ENCODE measurements at regions of chr12 and their contacts with region 1.

Region 1: GRCh38 chr12:12696562-12697383 is 790 bp upstream of the GPR19 start:
- DNase-seq: peak; percentile 94
- ATAC-seq: peak; percentile 80
- H3K4me3 Mint-ChIP-seq: peak overlapping the region; percentile 83
- H3K27ac Mint-ChIP-seq: peak overlapping the region; percentile 99
- H3K4me1 Mint-ChIP-seq: peaks cover 53% of the 10 kb centered on the region
- H3K27me3 Mint-ChIP-seq: no peaks in the 10 kb centered on the region

Region 2: GRCh38 chr12:12356886-12357718 is 339.7 kb before region 1 on chr12 and contains the start of gene BORCS5:
- CTCF ChIA-PET with region 1: interaction called, 3 read pairs
- POLR2A ChIA-PET with region 1: interaction called, 8 read pairs
- intact Hi-C with region 1: loop called (anchors 1 to 5 kb)
- DNase-seq: peak; percentile 99
- ATAC-seq: peak; percentile 94
- H3K4me3 Mint-ChIP-seq: peak within 1 kb of the TSS; percentile 98
- H3K27ac Mint-ChIP-seq: peak within 1 kb of the TSS; percentile 99
- H3K4me1 Mint-ChIP-seq: peaks cover 38% of the 10 kb centered on the region
- H3K27me3 Mint-ChIP-seq: no peaks in the 10 kb centered on the region
- total RNA-seq, gene BORCS5: 41.8 to 45.0 TPM

Region 3: GRCh38 chr12:12474931-12475795 is 221.6 kb before region 1 on chr12:
- CTCF ChIA-PET with region 1: no interaction called
- POLR2A ChIA-PET with region 1: no interaction called
- intact Hi-C with region 1: loop called in 1 of 2 experiments (anchors 1 kb)
- DNase-seq: peak; percentile 78
- ATAC-seq: peak; percentile 87
- H3K4me3 Mint-ChIP-seq: peak overlapping the region; percentile 59
- H3K27ac Mint-ChIP-seq: peak overlapping the region; percentile 97
- H3K4me1 Mint-ChIP-seq: peaks cover 81% of the 10 kb centered on the region
- H3K27me3 Mint-ChIP-seq: no peaks in the 10 kb centered on the region

Region 4: GRCh38 chr12:12611512-12612306 is 85.1 kb before region 1 on chr12 and contains the start of gene CREBL2:
- CTCF ChIA-PET with region 1: interaction called, 3 read pairs
- POLR2A ChIA-PET with region 1: interaction called, 14 read pairs
- intact Hi-C with region 1: loop called (anchors 1 to 2 kb)
- DNase-seq: peak; percentile 92
- ATAC-seq: peak; percentile 77
- H3K4me3 Mint-ChIP-seq: peak within 1 kb of the TSS; percentile 93
- H3K27ac Mint-ChIP-seq: peak within 1 kb of the TSS; percentile 98
- H3K4me1 Mint-ChIP-seq: peaks cover 68% of the 10 kb centered on the region
- H3K27me3 Mint-ChIP-seq: no peaks in the 10 kb centered on the region
- total RNA-seq, gene CREBL2: 16.8 to 20.2 TPM

Region 5: GRCh38 chr12:12724661-12725545 is 28.1 kb after region 1 on chr12:
- CTCF ChIA-PET with region 1: interaction called, 10 read pairs
- POLR2A ChIA-PET with region 1: interaction called, 26 read pairs
- intact Hi-C with region 1: loop called (anchors 1 kb)
- DNase-seq: peak; percentile 94
- ATAC-seq: peak; percentile 59
- H3K4me3 Mint-ChIP-seq: peak overlapping the region; percentile 93
- H3K27ac Mint-ChIP-seq: peak overlapping the region; percentile 98
- H3K4me1 Mint-ChIP-seq: peaks cover 45% of the 10 kb centered on the region
- H3K27me3 Mint-ChIP-seq: no peaks in the 10 kb centered on the region

Region 6: DNA sequence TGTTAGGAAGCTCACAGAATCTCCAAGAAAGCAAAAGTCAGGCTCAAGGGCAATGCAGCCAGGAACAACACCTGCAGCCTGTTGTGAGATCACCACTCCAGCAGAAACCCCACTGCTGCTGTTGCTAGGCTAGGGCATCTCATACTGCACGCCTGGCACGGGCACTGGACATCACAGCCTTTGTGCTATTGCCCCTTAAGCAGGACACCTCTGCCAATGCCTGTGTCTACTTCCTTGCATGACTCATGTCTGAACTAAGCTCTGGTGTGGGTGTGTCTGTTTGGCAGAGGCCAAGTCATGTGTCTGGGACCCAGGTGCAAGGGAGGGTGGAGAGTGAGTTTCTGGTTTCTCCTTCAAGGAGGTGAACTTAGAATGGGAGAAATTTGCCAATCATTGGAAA is 106.4 kb after region 1 on chr12:
- CTCF ChIA-PET with region 1: no interaction called
- POLR2A ChIA-PET with region 1: no interaction called
- intact Hi-C with region 1: no loop called
- DNase-seq: peak; percentile 53
- ATAC-seq: peak; percentile 82
- H3K4me3 Mint-ChIP-seq: no peak overlapping the region
- H3K27ac Mint-ChIP-seq: peak overlapping the region; percentile 61
- H3K4me1 Mint-ChIP-seq: peaks cover 48% of the 10 kb centered on the region
- H3K27me3 Mint-ChIP-seq: no peaks in the 10 kb centered on the region

Region 7: GRCh38 chr12:14167005-14167628 is 1470.3 kb after region 1 on chr12:
- CTCF ChIA-PET with region 1: no interaction called
- POLR2A ChIA-PET with region 1: interaction called, 11 read pairs
- intact Hi-C with region 1: no loop called
- DNase-seq: peak; percentile 50
- ATAC-seq: no peak
- H3K4me3 Mint-ChIP-seq: no peak overlapping the region
- H3K27ac Mint-ChIP-seq: no peak overlapping the region
- H3K4me1 Mint-ChIP-seq: no peaks in the 10 kb centered on the region
- H3K27me3 Mint-ChIP-seq: peaks cover 10% of the 10 kb centered on the region